GM10248 (cell line): ENCODE measurements at regions of chr11 and their contacts with region 1.

Region 1: DNA sequence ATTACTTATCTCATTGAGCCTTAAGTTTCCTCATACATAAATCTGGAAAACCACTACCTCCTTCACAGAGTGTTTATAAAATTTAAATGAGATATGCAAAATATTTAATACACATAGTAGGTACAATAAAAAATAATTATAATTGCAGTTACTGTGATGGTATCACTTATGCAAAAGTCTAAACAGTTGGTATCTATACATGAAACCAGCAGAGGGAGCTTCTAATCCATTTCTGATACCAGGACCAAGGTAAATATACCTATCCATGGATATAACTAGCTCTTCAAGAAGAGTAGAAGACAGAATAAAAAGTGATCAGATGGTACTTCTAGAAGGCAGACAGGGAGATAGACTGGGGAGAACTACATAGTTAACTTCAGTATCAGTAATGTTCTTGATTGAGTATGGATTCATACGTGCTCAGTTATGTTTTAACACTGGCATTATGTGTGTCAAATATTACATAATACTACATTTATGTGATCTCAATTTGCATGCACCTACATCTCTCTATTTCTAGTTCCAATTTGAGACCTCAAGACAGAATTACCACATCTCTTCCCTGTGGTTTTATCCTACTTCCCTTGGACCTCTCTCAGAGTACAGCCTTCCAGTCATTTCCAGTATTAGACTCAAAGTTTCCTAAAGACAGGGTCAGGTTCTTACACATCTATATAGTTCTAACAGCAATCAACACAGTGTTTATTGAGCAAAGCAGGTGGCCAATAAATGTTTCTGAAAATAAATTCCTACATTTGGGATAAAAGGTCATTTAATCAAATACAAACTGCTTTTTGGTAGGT is 13.7 kb upstream of the TSG101 start:
- DNase-seq: peak; percentile 40
- CTCF ChIP-seq: peak; percentile 36

Region 2: GRCh38 chr11:18526521-18527296 is 13.7 kb before region 1 on chr11 and contains the start of gene TSG101:
- CTCF ChIA-PET with region 1: interaction called, 12 read pairs
- POLR2A ChIA-PET with region 1: no interaction called
- DNase-seq: peak; percentile 94
- CTCF ChIP-seq: no peak

Region 3: GRCh38 chr11:18567081-18567480 is 26.7 kb after region 1 on chr11:
- CTCF ChIA-PET with region 1: no interaction called
- POLR2A ChIA-PET with region 1: no interaction called
- DNase-seq: no peak
- CTCF ChIP-seq: no peak

Region 4: DNA sequence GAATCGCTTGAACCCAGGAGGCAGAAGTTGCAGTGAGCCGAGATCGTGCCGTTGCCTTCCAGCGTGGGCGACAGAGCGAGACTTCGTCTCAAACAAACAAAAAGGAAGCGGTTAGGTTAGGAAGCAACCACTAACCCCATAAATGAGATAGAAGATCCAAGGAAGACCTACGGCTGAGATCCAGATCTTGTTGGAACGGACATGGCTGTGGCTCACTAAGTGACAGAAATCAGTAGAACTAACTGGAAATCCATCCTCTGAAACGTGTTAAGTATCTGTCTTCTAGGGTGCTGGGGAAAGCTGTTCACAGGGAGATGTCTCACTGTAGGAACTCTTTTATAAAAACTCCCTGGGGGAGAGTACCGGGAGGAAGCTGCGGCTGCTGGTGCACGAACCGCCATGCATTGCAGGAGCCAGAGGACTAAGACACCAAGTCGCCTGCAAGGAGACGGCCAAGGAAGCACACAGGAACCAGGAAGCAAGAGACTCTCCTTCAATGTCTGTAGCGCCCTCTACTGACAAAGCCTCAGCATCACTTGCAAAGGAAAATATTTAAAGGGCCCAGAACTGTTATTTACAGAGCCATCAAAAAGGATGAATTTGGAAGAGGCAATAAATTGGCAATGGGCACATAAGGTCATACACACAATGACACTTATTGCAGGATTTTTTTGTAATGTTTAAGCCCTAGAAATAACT is 110.6 kb after region 1 on chr11:
- CTCF ChIA-PET with region 1: interaction called, 15 read pairs
- POLR2A ChIA-PET with region 1: no interaction called
- DNase-seq: peak; percentile 70
- CTCF ChIP-seq: peak; percentile 62

Region 5: DNA sequence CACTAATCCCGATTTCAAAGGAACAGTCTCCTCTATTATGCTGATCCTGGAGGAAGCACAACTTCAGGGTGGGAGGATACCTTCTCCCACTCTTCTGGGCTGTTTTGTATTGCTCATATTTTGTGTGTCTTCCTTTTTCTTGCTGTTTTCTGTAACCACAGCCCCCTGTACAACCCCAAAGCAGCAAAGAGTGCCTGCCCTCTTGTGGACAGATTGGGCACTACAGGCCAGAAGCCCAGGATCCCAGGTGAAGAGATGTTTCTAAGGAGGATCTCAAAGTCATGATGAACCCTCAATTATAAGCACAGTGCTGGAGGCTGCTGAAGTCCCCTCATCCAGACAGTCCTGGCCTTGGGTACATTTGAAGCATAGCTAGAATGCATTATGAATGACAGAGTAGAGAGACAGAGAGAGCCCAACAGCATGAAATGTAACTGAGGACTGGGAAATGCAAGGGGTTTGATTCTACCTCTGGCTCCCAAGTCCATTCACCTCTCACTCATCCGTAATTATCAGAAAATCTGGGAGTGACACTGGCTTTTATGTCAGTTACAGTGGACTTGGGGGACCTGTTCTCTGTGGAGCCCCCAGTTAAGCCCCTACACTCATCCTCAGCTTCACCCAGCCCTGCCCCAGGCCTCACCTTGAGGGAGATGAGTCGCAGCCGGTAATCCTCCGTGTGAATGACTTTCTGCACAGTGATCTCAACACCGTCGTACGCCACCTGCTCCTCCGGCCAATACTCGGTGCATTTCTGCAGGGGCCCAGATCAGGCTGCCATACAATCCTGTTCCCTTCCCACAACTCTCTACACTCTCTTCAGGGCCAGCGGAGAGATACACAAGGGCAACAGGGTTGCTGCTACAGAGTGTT is 191.8 kb after region 1 on chr11:
- CTCF ChIA-PET with region 1: interaction called, 28 read pairs
- POLR2A ChIA-PET with region 1: no interaction called
- DNase-seq: peak; percentile 75
- CTCF ChIP-seq: peak; percentile 98

Region 6: DNA sequence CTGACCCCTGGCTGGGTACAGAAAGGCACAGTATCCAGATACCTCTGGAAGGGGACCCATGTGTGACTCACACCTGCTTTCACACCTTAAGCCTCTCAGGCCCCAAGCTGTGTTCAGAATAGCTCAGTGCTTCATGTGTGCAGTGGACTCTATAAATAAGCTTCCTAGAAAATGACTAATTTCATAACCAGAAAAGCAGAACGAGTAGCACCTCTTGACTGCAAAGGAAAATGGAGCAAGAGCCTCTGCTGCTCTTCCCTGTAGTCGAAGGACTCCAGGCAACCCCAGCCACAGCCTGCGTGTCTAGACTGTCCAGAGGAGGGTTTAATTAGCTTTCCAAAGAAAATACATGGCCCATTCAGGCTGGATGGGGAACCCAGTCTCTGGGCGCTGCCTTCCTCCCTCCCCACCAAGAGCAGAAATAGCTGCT is 228.1 kb after region 1 on chr11:
- CTCF ChIA-PET with region 1: interaction called, 16 read pairs
- POLR2A ChIA-PET with region 1: no interaction called
- DNase-seq: peak; percentile 69
- CTCF ChIP-seq: no peak